Lower lobe of right lung (tissue), 2 donors: ENCODE measurements at regions of chr12 and their contacts with region 1.

Region 1: DNA sequence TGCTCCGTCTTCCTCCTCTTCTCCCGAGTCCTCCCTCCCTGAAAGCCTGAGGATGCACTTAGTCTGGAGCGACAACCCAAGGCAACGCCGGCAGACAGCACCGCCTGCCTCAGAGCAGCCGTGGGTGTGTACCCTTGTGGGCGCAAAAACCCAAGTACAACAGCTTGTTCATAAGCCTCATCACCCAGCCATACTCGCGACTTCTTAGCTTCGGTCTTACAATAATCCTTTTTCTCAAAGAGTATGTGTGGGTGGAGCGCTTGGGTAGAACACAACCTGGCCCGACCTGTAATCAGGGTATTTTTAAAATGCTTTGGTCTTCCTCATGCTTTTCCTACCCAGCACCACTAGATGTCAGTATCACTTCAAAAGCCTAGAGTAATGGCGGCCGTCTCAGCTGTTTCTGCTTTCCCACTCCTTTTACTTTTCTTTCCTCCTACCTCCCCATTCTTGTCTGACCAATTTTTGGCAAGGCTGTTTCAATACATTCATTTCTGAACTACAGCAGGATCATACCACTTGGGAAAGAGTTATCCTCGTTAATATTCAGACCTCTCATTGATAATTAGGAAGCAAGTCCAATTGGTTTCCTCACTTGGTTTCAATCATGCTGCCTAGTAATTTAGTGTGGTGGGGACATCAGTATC is 198.9 kb downstream of the EPS8 start:
- DNase-seq: no peak
- ATAC-seq: peak; percentile 91 to 95
- H3K4me3 ChIP-seq: peak overlapping the region; percentile 35
- H3K27ac ChIP-seq: no peak overlapping the region
- H3K4me1 ChIP-seq: no peaks in the 10 kb centered on the region
- H3K27me3 ChIP-seq: no peaks in the 10 kb centered on the region
- CTCF ChIP-seq: peak; percentile 88

Region 2: DNA sequence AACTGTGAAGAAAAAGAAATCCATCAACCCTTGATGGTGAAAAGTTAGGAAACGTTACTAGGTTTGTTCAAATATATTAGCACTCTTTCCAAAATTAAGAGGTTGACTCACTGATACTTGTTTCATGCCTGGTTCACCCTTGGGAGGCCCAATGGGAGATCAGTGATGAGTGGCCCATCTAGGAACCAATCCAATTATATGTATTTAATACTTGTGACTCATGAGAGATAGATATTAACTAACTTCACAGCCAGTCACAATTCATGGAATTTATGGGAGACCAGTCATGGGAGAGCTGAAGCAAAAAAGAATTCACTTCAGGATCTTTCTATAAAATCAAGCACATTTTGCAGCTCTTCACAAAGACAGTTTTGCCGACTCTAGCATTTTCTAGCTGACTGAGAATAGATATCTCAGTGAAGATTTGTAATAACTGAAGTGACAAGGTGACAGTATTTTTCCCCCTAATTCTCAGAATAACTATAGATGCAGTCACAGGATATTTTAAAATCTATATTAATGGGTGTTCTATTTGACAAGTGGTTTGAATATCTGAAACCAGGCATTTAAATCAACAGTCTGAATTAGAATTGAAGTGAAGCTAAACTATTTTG is 31.3 kb before region 1 on chr12:
- intact Hi-C with region 1: no loop called
- DNase-seq: no peak
- ATAC-seq: no peak
- H3K4me3 ChIP-seq: no peak overlapping the region
- H3K27ac ChIP-seq: no peak overlapping the region
- H3K4me1 ChIP-seq: peaks cover 18% of the 10 kb centered on the region
- H3K27me3 ChIP-seq: no peaks in the 10 kb centered on the region
- CTCF ChIP-seq: no peak

Region 3: DNA sequence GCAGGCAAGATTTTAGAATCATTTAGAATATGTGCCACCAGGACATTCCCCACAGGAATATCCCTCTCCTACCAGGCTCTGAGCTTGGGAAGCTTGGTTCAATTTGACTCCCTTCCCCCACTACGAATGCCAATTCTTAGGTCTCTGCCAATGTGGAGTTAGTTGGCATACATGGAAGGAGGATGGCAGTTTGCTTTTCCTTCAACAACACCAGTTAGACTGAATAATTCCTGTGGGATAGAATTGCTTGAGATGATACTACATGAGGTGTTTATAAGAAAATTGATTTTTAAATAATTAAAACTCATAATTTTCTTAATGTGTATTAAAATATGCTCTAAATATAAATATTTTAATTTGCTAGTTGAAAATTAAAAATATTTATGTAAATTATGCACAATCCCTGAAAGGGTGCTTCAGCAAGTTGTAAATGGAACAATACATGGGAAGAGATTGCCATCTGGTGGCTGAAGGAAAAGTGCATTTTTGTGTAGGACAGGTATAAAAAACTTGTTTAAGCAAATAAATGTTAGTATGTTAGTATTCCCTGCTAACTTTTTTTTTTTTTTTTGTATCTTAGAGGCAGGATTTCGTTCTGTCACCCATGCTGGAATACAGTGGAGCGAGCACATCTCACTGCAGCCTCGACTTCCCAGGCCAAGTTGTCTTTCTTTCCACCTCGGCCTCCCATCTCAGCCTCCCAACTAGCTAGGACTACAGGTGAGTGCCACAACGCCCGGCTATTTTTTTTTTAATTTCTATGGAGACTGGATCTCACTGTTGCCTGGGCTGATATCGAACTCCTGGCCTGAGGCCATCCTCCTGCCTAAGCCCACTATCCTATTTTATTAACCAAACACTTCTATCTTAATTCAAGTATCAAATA is 266.0 kb after region 1 on chr12:
- intact Hi-C with region 1: loop called (anchors 5 kb)
- DNase-seq: no peak
- ATAC-seq: peak; percentile 34 to 79
- H3K4me3 ChIP-seq: no peak overlapping the region
- H3K27ac ChIP-seq: no peak overlapping the region
- H3K4me1 ChIP-seq: no peaks in the 10 kb centered on the region
- H3K27me3 ChIP-seq: no peaks in the 10 kb centered on the region
- CTCF ChIP-seq: peak; percentile 82